BJ (cell line): ENCODE measurements at regions of chr11 and their contacts with region 1.

Region 1: GRCh38 chr11:74024261-74025029 is 15.6 kb upstream of the UCP3 start:
- DNase-seq: no peak
- H3K4me3 ChIP-seq: no peak overlapping the region
- H3K27me3 ChIP-seq: no peaks in the 10 kb centered on the region
- CTCF ChIP-seq: no peak

Region 2: DNA sequence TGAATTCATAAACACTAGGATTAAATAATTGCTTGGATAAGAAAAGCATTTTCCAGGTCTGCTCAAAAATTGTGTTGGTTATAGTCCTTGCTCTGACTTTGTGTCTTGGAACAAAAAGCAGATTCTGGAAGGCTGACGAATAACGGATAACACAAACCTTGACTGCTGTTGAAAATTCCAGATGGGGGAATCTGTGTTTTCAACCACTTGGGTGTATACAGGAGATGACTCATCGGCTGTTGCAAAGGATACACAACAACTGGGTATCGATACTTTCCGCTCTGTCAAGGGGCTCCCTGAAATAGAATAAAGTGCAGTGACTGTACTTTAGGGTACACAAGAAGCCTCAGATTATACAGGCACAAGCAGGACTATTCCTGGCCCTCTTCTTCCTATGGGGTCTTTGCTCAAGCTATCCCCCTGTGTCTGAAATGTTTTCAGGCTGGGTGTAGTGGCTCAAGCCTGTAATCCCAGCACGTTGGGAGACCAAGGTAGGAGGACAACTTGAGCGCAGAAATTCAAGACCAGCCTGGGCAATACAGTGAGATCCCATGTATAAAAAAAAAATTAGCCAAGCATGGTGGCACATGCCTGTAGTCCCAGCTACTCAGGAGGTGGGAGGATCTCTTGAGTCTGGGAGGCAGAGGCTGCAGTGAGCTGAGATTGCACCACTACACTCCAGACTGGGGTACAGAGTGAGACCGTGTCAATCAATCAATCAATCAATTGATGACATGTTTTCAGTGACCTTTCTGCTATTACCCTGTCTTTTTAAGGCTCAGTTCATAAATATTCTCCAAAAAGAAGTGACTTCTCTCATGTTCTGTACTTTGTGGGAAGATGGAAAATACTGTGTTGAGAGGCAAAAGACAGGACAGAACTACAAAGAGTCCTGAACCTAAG is 33.1 kb after region 1 on chr11:
- CTCF ChIA-PET with region 1: no interaction called
- POLR2A ChIA-PET with region 1: interaction called, 12 read pairs
- DNase-seq: no peak
- H3K4me3 ChIP-seq: no peak overlapping the region
- H3K27me3 ChIP-seq: no peaks in the 10 kb centered on the region
- CTCF ChIP-seq: no peak